ENCODE measurements at regions of chr22 and their contacts with region 1.

Region 1: DNA sequence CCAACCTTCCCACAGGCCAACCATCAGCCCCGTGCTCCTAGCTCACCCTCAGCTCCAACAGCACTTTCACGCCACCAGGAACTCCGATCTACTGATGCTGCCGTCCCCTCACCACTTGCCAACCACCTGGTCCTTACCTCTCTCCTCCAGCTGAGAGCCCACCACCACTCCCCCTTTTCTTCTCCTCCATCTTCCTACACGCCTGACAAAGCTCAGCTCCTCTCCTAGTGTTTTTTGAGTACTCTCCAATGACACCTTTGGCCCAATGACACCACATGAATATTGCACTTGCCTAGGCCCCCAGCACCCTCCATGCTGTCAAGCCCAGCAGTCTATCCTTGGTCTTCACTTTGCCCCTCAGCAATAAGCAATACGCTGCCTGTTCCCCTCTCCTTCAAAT is 30.7 kb downstream of the HIRA start:
- DNase-seq: no peak
- ATAC-seq: no peak

Region 2: DNA sequence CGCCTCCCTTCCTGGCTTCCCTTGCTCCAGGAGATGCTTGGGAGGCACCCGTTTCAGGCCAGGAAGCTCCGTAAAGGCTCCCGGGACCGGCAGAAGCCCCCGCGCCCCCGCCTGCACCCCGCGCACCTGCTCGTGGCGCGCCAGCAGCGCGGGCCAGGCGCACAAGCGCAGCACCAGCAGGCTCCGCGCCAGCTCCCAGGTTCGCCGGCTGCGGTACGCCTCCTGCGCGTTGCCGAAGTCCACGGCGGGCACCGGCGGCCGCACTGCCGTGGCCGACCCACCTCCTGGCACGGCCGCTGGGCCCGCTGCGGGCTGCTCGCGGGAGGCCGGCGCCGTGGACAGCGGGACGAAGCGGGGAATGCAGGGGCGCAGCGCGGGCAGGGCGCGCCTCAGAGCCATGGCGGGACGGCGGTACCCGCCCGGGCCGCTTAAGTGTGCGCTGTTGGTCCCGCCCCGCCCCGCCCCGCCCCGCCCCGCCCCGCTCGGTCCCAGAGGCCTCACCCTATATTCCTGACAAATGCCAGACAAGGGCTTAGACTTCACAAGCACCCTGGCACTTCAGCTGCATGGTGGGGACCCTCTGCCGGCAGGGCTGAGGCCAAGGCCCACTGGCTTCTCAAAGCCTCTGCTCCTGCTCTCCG is 464.9 kb before region 1 on chr22 and contains the start of gene PRODH:
- intact Hi-C with region 1: no loop called
- DNase-seq: no peak
- ATAC-seq: peak; percentile 65
- total RNA-seq, gene PRODH: 7.4 TPM

Region 3: GRCh38 chr22:19238900-19239299 is 162.0 kb before region 1 on chr22:
- intact Hi-C with region 1: loop called (anchors 5 kb)
- DNase-seq: no peak
- ATAC-seq: peak; percentile 68

Region 4: GRCh38 chr22:19438298-19438697 is 37.4 kb after region 1 on chr22:
- intact Hi-C with region 1: no loop called
- DNase-seq: no peak
- ATAC-seq: no peak

Region 5: GRCh38 chr22:19463496-19464469 is 62.9 kb after region 1 on chr22:
- intact Hi-C with region 1: loop called (anchors 2 kb)
- DNase-seq: peak; percentile 85
- ATAC-seq: peak; percentile 95

Measured in Right ventricle myocardium inferior (tissue), 1 donor.